Endothelial cell of umbilical vein (primary cell): ENCODE measurements at regions of chr19 and their contacts with region 1.

Region 1: DNA sequence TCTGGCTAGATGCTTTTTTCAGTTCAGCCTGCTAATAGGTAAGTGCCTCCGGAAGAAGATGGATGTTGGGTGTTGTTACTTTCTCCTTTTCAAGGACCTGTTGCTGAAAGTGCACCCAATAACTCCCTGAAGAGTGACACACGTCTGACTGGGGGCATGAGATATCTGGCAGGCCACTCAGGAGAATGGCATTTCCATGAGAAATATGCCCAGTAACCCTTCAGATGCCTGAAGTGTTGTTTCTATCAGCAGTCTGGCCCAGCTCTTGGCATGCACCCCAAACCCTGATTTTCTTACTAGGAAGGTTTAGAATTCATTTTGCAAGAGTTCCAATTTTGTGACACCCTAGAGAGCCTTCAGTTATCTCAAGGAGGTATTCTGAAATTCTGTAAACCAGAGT is 71.5 kb downstream of the ARHGAP35 start:
- DNase-seq: peak; percentile 70
- H3K4me3 ChIP-seq: no peak overlapping the region
- H3K27ac ChIP-seq: peak overlapping the region; percentile 40
- H3K4me1 ChIP-seq: peaks cover 45% of the 10 kb centered on the region
- H3K27me3 ChIP-seq: no peaks in the 10 kb centered on the region
- CTCF ChIP-seq: no peak
- POLR2A ChIP-seq: no peak

Region 2: GRCh38 chr19:46954993-46955812 is 22.9 kb after region 1 on chr19:
- CTCF ChIA-PET with region 1: no interaction called
- POLR2A ChIA-PET with region 1: no interaction called
- dilution Hi-C with region 1: no loop called
- intact Hi-C with region 1: loop called (anchors 1 kb)
- DNase-seq: peak; percentile 75
- H3K4me3 ChIP-seq: peak overlapping the region in 2 of 3 experiments; percentile 8 to 54
- H3K27ac ChIP-seq: peak overlapping the region; percentile 73
- H3K4me1 ChIP-seq: peaks cover 20% of the 10 kb centered on the region
- H3K27me3 ChIP-seq: no peaks in the 10 kb centered on the region
- CTCF ChIP-seq: no peak
- POLR2A ChIP-seq: no peak

Region 3: DNA sequence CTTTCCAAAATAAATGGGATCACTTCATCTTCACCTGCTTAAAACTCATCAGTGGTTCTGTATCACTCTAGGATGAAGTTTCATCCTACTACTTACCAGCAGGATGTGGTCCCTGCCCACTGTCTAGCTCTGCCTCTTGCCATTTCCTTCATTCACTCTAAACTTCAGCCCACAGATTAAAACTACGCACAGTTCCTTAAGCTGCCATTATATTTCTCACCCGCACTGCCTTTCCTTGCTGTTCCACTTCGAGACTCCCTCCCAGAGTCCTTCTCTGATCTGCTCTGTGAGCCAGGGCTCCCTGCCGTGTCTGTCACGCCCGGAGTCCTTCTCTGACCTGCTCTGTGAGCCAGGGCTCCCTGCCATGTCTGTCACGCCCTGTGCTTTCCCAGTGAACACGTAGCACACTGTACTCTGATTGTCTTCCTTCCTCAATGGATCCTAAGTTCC is 35.3 kb after region 1 on chr19:
- CTCF ChIA-PET with region 1: no interaction called
- POLR2A ChIA-PET with region 1: no interaction called
- dilution Hi-C with region 1: no loop called
- intact Hi-C with region 1: no loop called
- DNase-seq: no peak
- H3K4me3 ChIP-seq: no peak overlapping the region
- H3K27ac ChIP-seq: no peak overlapping the region
- H3K4me1 ChIP-seq: peaks cover 10% of the 10 kb centered on the region
- H3K27me3 ChIP-seq: no peaks in the 10 kb centered on the region
- CTCF ChIP-seq: no peak
- POLR2A ChIP-seq: no peak

Region 4: DNA sequence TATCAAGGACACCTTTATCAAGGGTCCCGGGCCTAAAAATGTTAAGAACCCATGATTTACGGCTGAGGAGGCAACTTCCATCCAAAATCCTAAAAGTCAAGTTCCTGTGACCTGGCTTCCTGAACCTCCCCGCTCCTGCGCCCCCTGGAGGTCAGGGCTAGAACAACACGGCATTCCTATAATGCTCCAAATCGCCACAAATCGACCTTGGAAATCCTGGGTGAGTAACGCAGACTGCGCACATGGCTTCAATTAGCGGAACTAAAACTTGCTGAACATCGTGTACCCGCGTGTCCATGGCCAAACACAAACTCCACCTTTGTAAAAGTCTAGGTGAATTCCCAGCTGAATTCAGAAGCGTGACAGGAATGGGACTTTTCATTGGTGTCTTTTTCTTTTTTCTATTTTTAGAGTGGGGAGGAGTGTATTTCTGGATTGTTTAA is 373.0 kb after region 1 on chr19:
- CTCF ChIA-PET with region 1: no interaction called
- POLR2A ChIA-PET with region 1: no interaction called
- dilution Hi-C with region 1: no loop called
- intact Hi-C with region 1: no loop called
- DNase-seq: peak; percentile 58
- H3K4me3 ChIP-seq: no peak overlapping the region
- H3K27ac ChIP-seq: no peak overlapping the region
- H3K4me1 ChIP-seq: no peaks in the 10 kb centered on the region
- H3K27me3 ChIP-seq: no peaks in the 10 kb centered on the region
- CTCF ChIP-seq: peak; percentile 93 to 99
- POLR2A ChIP-seq: no peak